T-cell (primary cell): ENCODE measurements at regions of chr7 and their contacts with region 1.

Region 1: DNA sequence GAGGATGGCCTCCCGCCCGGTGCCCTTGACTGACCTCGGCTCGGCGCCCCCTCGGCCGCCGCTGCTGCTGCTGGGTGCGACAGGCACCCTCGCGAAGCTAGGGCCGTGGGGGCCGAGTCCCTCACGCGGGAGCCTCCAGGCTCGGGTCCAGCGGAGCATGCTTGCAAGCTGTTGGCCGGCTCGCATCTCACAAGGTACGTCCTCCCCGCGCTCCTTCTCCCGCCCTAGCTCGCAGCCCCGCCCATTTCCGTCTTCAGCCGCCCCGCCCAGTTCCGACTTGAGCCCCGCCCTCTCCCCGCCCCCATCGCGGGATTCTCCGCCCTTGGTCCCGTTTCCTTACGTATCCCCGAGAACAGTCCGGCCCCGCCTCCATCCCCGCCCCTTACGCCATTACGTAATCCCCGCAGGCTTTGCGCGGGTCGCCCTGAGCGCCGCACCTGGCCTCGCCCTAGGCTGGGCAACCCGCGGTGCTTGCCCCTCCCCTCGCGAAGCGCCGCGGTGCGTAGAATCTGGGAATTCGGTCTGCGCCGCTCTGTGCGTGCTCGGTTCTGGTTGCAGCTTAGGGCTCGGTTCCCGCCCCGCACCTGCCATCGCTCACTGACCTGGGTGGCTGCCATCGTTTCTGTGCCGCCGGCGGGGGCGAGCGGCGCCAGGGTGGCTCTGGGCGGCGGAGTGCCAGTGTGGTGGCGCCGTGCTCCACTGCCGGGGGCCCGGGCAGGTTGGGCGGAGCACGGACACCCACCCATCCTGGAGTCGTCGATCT is at the start of gene ABHD11:
- DNase-seq: peak; percentile 89 to 100 (median 96)
- ATAC-seq: peak; percentile 86 to 90 (median 89)
- H3K4me3 ChIP-seq: peak within 1 kb of the TSS; percentile 75 to 94
- H3K4me3 Mint-ChIP-seq: peak within 1 kb of the TSS; percentile 89 to 91 (median 90)
- H3K27ac ChIP-seq: peak within 1 kb of the TSS; percentile 81
- H3K27ac Mint-ChIP-seq: peak within 1 kb of the TSS; percentile 88 to 93
- H3K4me1 ChIP-seq: peaks cover 2 to 28% of the 10 kb centered on the region in 2 experiments
- H3K4me1 Mint-ChIP-seq: peaks cover 11 to 25% (median 17%) of the 10 kb centered on the region in 3 donors
- H3K27me3 ChIP-seq: peaks cover 0 to 2% of the 10 kb centered on the region in 2 experiments
- H3K27me3 Mint-ChIP-seq: no peaks in the 10 kb centered on the region
- total RNA-seq, gene ABHD11: 14.5 to 24.3 (median 18.8) TPM

Region 2: DNA sequence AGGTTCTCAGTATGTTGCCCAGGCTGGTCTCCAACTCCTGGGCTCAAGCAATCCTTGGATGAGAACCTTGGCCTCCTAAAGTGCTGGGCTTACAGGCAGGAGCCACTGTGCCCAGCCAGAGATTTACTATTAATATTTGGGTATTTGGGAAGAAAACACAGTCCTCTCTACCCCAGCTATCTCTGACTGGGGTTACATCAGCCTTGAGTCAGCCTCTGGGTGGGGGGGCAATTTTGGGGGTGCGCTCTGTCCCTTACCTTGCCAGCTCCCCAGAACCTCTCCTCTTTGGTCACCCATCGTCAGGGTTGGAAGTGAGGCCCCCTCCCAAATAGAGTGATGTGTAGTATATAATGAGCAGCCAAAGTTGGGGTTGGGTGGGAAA is 116.3 kb before region 1 on chr7:
- CTCF ChIA-PET with region 1: interaction called in 1 of 2 experiments, 3 read pairs
- POLR2A ChIA-PET with region 1: interaction called in 1 of 2 experiments, 11 read pairs
- DNase-seq: no peak
- ATAC-seq: no peak
- H3K4me3 ChIP-seq: no peak overlapping the region
- H3K4me3 Mint-ChIP-seq: peak overlapping the region in 1 of 3 donors; percentile 62
- H3K27ac ChIP-seq: no peak overlapping the region
- H3K27ac Mint-ChIP-seq: no peak overlapping the region
- H3K4me1 ChIP-seq: peaks cover 0 to 20% of the 10 kb centered on the region in 2 experiments
- H3K4me1 Mint-ChIP-seq: peaks cover 4 to 13% (median 8%) of the 10 kb centered on the region in 3 donors
- H3K27me3 ChIP-seq: peaks cover 3 to 67% of the 10 kb centered on the region in 2 experiments
- H3K27me3 Mint-ChIP-seq: peaks cover 32 to 59% of the 10 kb centered on the region in 2 donors

Region 3: GRCh38 chr7:73870041-73870492 is 131.3 kb after region 1 on chr7:
- CTCF ChIA-PET with region 1: no interaction called
- POLR2A ChIA-PET with region 1: no interaction called
- DNase-seq: no peak
- ATAC-seq: no peak
- H3K4me3 ChIP-seq: no peak overlapping the region
- H3K4me3 Mint-ChIP-seq: no peak overlapping the region
- H3K27ac ChIP-seq: no peak overlapping the region
- H3K27ac Mint-ChIP-seq: no peak overlapping the region
- H3K4me1 ChIP-seq: no peaks in the 10 kb centered on the region
- H3K4me1 Mint-ChIP-seq: no peaks in the 10 kb centered on the region
- H3K27me3 ChIP-seq: peaks cover 0 to 8% of the 10 kb centered on the region in 2 experiments
- H3K27me3 Mint-ChIP-seq: no peaks in the 10 kb centered on the region

Region 4: DNA sequence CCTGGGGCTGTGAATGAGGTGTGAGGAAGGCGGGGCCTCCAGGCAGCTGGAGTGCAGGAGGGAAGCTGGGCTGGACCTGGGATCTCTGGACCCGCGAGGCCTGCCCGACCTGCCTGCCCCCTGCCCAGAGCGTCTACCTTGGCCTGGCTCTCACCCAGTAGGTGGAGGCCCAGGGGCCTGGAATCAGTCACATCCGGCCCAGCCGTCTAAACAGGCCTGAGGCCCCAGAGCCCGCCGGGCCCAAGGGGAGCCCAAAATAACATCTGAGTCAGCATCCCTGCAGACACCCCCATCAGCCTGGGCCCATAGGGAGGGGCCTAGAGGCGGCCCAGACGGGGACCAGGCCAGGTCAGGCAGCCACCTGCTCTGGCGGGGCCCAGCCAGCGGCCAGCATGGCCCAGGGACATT is 274.1 kb after region 1 on chr7:
- CTCF ChIA-PET with region 1: no interaction called
- POLR2A ChIA-PET with region 1: no interaction called
- DNase-seq: no peak
- ATAC-seq: no peak
- H3K4me3 ChIP-seq: no peak overlapping the region
- H3K4me3 Mint-ChIP-seq: no peak overlapping the region
- H3K27ac ChIP-seq: no peak overlapping the region
- H3K27ac Mint-ChIP-seq: no peak overlapping the region
- H3K4me1 ChIP-seq: no peaks in the 10 kb centered on the region
- H3K4me1 Mint-ChIP-seq: no peaks in the 10 kb centered on the region
- H3K27me3 ChIP-seq: peaks cover 0 to 30% of the 10 kb centered on the region in 2 experiments
- H3K27me3 Mint-ChIP-seq: peaks cover 0 to 1% of the 10 kb centered on the region in 2 donors